ENCODE measurements at regions of chr2 and their contacts with region 1.

Region 1: GRCh38 chr2:74178201-74179062 is at the start of gene MOB1A:
- DNase-seq: peak; percentile 98
- ATAC-seq: peak; percentile 98
- H3K4me3 ChIP-seq: peak within 1 kb of the TSS; percentile 66 to 91 (median 82)
- H3K27ac ChIP-seq: peak within 1 kb of the TSS; percentile 96
- H3K4me1 ChIP-seq: peaks cover 43% of the 10 kb centered on the region
- H3K27me3 ChIP-seq: no peaks in the 10 kb centered on the region; a peak in 1 of 5 replicates
- CTCF ChIP-seq: no peak; the same call in 1 of the 2 replicates
- EP300 ChIP-seq: no peak
- POLR2A ChIP-seq: peak; percentile 88 to 92; a peak in 3 of 4 replicates
- RAD21 ChIP-seq: peak; percentile 56
- total RNA-seq, gene MOB1A: 139 and 217 TPM in 2 replicates

Region 2: GRCh38 chr2:74147727-74148456 is 30.5 kb before region 1 on chr2 and contains the start of gene BOLA3:
- CTCF ChIA-PET with region 1: no interaction called
- POLR2A ChIA-PET with region 1: interaction called, 27 read pairs
- in situ Hi-C with region 1: no loop called
- intact Hi-C with region 1: no loop called
- DNase-seq: peak; percentile 78
- ATAC-seq: peak; percentile 94
- H3K4me3 ChIP-seq: peak within 1 kb of the TSS; percentile 84 to 95 (median 94)
- H3K27ac ChIP-seq: peak within 1 kb of the TSS; percentile 72
- H3K4me1 ChIP-seq: peaks cover 33% of the 10 kb centered on the region
- H3K27me3 ChIP-seq: no peaks in the 10 kb centered on the region; a peak in 1 of 5 replicates
- CTCF ChIP-seq: peak; percentile 84
- EP300 ChIP-seq: peak in 1 of 2 experiments; percentile 17; a peak in 2 of 4 replicates
- POLR2A ChIP-seq: peak; percentile 92 to 96
- RAD21 ChIP-seq: peak; percentile 82
- total RNA-seq, gene BOLA3: 170 and 172 TPM in 2 replicates

Region 3: GRCh38 chr2:74216642-74217041 is 38.2 kb after region 1 on chr2:
- CTCF ChIA-PET with region 1: no interaction called
- POLR2A ChIA-PET with region 1: interaction called, 16 read pairs
- in situ Hi-C with region 1: no loop called
- intact Hi-C with region 1: no loop called
- DNase-seq: no peak
- ATAC-seq: no peak
- H3K4me3 ChIP-seq: no peak overlapping the region
- H3K27ac ChIP-seq: no peak overlapping the region
- H3K4me1 ChIP-seq: peaks cover 16% of the 10 kb centered on the region
- H3K27me3 ChIP-seq: no peaks in the 10 kb centered on the region
- CTCF ChIP-seq: no peak
- EP300 ChIP-seq: no peak
- POLR2A ChIP-seq: no peak; a peak in 1 of 4 replicates
- RAD21 ChIP-seq: no peak

Measured in HepG2 (cell line).